Mammary epithelial cell (primary cell): ENCODE measurements at regions of chr15 and their contacts with region 1.

Region 1: DNA sequence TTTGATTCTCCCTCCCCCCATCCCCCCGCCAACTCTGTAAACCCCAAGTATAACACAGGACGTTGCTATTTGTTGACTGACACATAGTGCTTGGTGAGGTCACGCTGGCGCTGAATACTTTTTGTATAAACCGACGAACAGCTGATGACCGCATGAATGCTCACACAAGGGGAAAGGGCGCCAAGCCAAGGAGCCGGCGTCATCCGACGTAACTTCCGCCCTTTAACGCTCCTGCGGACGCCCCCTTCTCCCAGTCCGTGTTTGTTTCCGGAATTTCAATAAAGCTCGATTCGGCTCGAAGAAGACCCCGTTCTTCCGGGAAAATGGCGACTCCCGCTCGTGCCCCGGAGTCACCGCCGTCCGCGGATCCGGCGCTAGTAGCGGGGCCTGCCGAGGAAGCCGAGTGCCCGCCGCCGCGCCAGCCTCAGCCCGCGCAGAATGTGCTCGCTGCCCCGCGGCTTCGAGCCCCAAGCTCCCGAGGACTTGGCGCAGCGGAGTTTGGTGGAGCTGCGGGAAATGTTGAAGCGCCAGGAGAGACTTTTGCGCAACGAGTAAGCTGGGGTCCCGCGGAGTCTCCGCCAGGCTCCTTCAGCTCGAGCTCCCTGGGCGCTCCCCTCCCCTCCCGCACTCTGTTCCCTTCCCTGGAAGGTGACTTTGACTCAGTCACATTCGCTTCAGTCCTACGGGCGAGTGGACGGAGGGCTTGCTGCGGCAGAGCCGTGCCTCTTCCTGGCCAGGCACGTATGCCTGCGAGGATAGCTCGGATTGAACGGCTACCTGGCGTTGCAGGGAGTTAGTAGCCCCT is at the start of gene POLR2M:
- DNase-seq: peak; percentile 97
- H3K4me3 ChIP-seq: peak within 1 kb of the TSS; percentile 86 to 98 (median 95)
- H3K27ac ChIP-seq: peak within 1 kb of the TSS; percentile 94
- H3K4me1 ChIP-seq: peaks cover 27% of the 10 kb centered on the region
- H3K27me3 ChIP-seq: no peaks in the 10 kb centered on the region
- CTCF ChIP-seq: no peak
- total RNA-seq, gene POLR2M: 82.9 to 109 TPM

Region 2: GRCh38 chr15:57640935-57641682 is 65.5 kb before region 1 on chr15:
- CTCF ChIA-PET with region 1: no interaction called
- dilution Hi-C with region 1: no loop called
- in situ Hi-C with region 1: no loop called
- intact Hi-C with region 1: loop called (anchors 1 kb)
- DNase-seq: peak; percentile 30
- H3K4me3 ChIP-seq: no peak overlapping the region
- H3K27ac ChIP-seq: no peak overlapping the region
- H3K4me1 ChIP-seq: no peaks in the 10 kb centered on the region
- H3K27me3 ChIP-seq: no peaks in the 10 kb centered on the region
- CTCF ChIP-seq: peak; percentile 41 to 60

Region 3: DNA sequence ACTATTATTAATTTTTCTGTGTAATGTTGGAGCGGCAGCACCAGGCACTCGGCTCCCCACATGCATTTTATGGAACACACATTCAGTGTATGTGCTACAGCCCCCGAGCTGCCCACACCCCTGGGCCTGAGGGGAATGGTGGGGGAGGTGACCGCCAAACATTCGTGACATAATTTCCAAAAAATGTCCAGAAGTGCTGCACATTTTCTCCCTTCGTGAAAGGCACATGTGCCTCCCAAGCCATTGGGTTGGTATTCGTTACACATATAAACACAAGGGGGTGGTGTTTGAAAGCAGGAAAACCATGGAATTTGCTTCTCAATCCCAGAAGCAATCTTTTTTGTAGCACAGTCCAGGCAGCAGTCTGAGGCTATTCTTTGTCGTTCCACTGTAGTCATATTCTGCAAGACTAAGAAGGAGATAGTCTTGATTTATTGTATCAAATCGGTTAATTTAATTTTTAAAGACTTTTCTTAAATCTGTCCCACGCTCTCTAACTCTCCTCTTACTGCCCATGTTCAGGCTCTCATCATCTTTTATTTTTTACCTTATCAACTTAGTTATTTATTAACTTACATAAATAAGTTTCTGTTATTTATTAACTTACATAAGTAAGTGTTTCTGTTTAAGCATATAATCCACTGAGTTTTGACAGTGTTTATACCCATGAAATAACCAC is 39.3 kb before region 1 on chr15:
- CTCF ChIA-PET with region 1: no interaction called
- dilution Hi-C with region 1: no loop called
- in situ Hi-C with region 1: no loop called
- intact Hi-C with region 1: loop called (anchors 2 kb)
- DNase-seq: peak; percentile 50
- H3K4me3 ChIP-seq: no peak overlapping the region
- H3K27ac ChIP-seq: peak overlapping the region; percentile 6
- H3K4me1 ChIP-seq: peaks cover 18% of the 10 kb centered on the region
- H3K27me3 ChIP-seq: no peaks in the 10 kb centered on the region
- CTCF ChIP-seq: peak; percentile 47 to 64

Region 4: GRCh38 chr15:57680021-57680420 is 26.6 kb before region 1 on chr15:
- CTCF ChIA-PET with region 1: no interaction called
- dilution Hi-C with region 1: no loop called
- in situ Hi-C with region 1: no loop called
- intact Hi-C with region 1: loop called (anchors 1 kb)
- DNase-seq: peak; percentile 84
- H3K4me3 ChIP-seq: no peak overlapping the region
- H3K27ac ChIP-seq: peak overlapping the region; percentile 38
- H3K4me1 ChIP-seq: peaks cover 23% of the 10 kb centered on the region
- H3K27me3 ChIP-seq: no peaks in the 10 kb centered on the region
- CTCF ChIP-seq: no peak

Region 5: GRCh38 chr15:57727031-57727430 is 20.4 kb after region 1 on chr15:
- CTCF ChIA-PET with region 1: no interaction called
- dilution Hi-C with region 1: no loop called
- in situ Hi-C with region 1: no loop called
- intact Hi-C with region 1: loop called (anchors 1 kb)
- DNase-seq: peak; percentile 96
- H3K4me3 ChIP-seq: no peak overlapping the region
- H3K27ac ChIP-seq: peak overlapping the region; percentile 37
- H3K4me1 ChIP-seq: peaks cover 29% of the 10 kb centered on the region
- H3K27me3 ChIP-seq: no peaks in the 10 kb centered on the region
- CTCF ChIP-seq: no peak

Region 6: GRCh38 chr15:57890351-57890750 is 183.7 kb after region 1 on chr15:
- CTCF ChIA-PET with region 1: no interaction called
- dilution Hi-C with region 1: no loop called
- in situ Hi-C with region 1: no loop called
- intact Hi-C with region 1: no loop called
- DNase-seq: peak; percentile 40
- H3K4me3 ChIP-seq: no peak overlapping the region
- H3K27ac ChIP-seq: no peak overlapping the region
- H3K4me1 ChIP-seq: no peaks in the 10 kb centered on the region
- H3K27me3 ChIP-seq: no peaks in the 10 kb centered on the region
- CTCF ChIP-seq: no peak